A673 (cell line): ENCODE measurements at regions of chr10 and their contacts with region 1.

Region 1: DNA sequence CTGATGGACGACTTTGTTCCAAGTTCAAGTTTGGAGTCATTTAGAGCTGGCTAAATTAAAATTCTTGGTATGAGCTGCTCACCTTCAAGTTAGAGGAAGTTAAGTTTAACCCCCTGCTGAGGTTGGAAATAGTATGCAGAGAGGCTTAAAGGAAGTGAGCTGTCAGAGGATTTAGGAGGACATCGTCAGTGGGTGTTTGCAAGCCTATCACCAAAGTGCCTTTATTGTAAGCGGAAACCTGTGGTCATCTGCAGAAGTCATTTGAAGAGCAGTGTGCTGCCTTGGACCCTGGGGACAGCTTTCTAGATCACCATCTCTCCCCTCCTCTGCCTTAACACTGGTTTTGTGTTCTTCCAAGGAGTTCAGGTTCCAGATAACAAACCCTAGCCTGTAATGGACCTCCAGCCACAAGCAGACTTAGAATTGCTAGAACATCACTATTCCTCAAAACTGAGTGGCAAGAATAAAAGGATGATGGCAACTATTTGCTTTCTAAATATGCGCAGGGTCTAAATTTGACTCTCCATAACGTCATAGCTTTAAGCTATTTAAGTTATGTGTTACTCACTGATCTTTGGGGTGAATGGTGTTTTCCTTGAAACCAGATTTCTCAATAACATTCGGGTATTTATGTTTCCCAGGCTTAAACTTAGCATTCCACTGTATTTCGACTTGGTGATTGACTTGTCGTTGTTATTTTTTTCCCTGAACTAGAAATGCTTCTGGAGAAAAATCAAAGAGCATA is 93.4 kb downstream of the SLC39A12 start:
- DNase-seq: peak; percentile 83
- H3K4me3 ChIP-seq: no peak overlapping the region
- H3K27ac ChIP-seq: no peak overlapping the region
- H3K4me1 ChIP-seq: peaks cover 15% of the 10 kb centered on the region
- H3K27me3 ChIP-seq: no peaks in the 10 kb centered on the region
- CTCF ChIP-seq: no peak

Region 2: DNA sequence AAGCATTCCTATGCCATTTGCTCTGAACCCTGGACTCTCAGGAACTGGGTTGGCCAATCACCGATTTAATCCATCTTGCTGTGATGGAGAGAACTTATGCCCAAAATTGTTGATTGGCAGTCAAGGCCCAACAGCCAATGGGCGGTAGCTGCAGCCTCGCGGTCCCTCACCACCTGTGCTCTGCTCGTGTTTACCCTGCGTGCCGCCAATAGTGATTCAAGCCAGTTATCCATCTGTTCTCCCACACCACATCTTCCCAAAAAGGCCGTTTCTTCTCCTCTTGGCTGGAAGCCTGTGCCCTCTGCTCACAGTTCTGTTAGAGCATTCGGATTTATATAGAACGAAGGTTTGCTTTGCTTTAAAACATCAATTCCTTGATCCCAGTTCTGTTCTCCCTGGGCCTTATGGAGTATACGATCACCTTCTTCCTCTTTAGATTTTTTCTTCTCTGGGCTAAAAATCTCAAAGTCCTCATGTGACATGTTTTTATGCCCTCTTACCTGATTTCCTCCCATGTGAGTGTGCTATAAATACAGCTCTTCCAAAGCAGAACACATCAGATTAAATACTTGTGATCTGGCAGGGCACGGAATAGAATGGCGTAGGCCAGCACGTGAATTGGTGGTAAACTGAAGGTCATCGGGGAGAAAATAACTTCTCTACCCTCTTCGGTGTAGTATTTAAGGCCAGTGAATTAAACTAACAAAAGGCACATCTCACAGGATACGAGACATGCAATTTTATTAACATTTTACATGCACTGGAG is 393.4 kb after region 1 on chr10:
- CTCF ChIA-PET with region 1: no interaction called
- POLR2A ChIA-PET with region 1: interaction called, 15 read pairs
- intact Hi-C with region 1: no loop called
- DNase-seq: no peak
- H3K4me3 ChIP-seq: no peak overlapping the region
- H3K27ac ChIP-seq: no peak overlapping the region
- H3K4me1 ChIP-seq: no peaks in the 10 kb centered on the region
- H3K27me3 ChIP-seq: no peaks in the 10 kb centered on the region
- CTCF ChIP-seq: no peak